Activated T-helper 1 cell treated with anti-CD3 and anti-CD28 coated beads, Interleukin-12 subunit alpha, Interleukin-12 subunit beta, Interleukin-2, Interleukin-4 antibody, amounts not matched to agents 30 ng/mL and 10 ng/mL and 1 ng/mL, durations not matched to agents 14 hours and 24 hours and 36 hours (primary cell): ENCODE measurements at regions of chr10 and their contacts with region 1.

Region 1: GRCh38 chr10:80205478-80206276 is at the start of gene ANXA11:
- DNase-seq: peak; percentile 76
- H3K4me3 Mint-ChIP-seq: peak within 1 kb of the TSS; percentile 94
- H3K27ac Mint-ChIP-seq: peak within 1 kb of the TSS; percentile 92
- H3K4me1 Mint-ChIP-seq: peaks cover 50% of the 10 kb centered on the region
- H3K27me3 Mint-ChIP-seq: peaks cover 5% of the 10 kb centered on the region
- total RNA-seq, gene ANXA11: 216 and 239 TPM in 2 replicates

Region 2: GRCh38 chr10:78302989-78303854 is 1902.5 kb before region 1 on chr10:
- intact Hi-C with region 1: loop called (anchors 5 kb)
- DNase-seq: peak; percentile 91
- H3K4me3 Mint-ChIP-seq: peak overlapping the region; percentile 87
- H3K27ac Mint-ChIP-seq: peak overlapping the region; percentile 91
- H3K4me1 Mint-ChIP-seq: peaks cover 15% of the 10 kb centered on the region
- H3K27me3 Mint-ChIP-seq: peaks cover 16% of the 10 kb centered on the region

Region 3: GRCh38 chr10:79322616-79323543 is 882.8 kb before region 1 on chr10:
- intact Hi-C with region 1: loop called (anchors 10 kb)
- DNase-seq: peak; percentile 76
- H3K4me3 Mint-ChIP-seq: peak overlapping the region; percentile 70
- H3K27ac Mint-ChIP-seq: peak overlapping the region; percentile 98
- H3K4me1 Mint-ChIP-seq: peaks cover 71% of the 10 kb centered on the region
- H3K27me3 Mint-ChIP-seq: no peaks in the 10 kb centered on the region

Region 4: GRCh38 chr10:79445141-79445976 is 760.3 kb before region 1 on chr10 and contains the start of gene ZCCHC24:
- intact Hi-C with region 1: loop called (anchors 10 kb)
- DNase-seq: peak; percentile 91
- H3K4me3 Mint-ChIP-seq: peak within 1 kb of the TSS; percentile 87
- H3K27ac Mint-ChIP-seq: peak within 1 kb of the TSS; percentile 68
- H3K4me1 Mint-ChIP-seq: peaks cover 21% of the 10 kb centered on the region
- H3K27me3 Mint-ChIP-seq: peaks cover 56% of the 10 kb centered on the region
- total RNA-seq, gene ZCCHC24: 0.52 and 0.59 TPM in 2 replicates

Region 5: GRCh38 chr10:80032503-80032902 is 173.2 kb before region 1 on chr10:
- intact Hi-C with region 1: no loop called
- DNase-seq: no peak
- H3K4me3 Mint-ChIP-seq: no peak overlapping the region
- H3K27ac Mint-ChIP-seq: no peak overlapping the region
- H3K4me1 Mint-ChIP-seq: no peaks in the 10 kb centered on the region
- H3K27me3 Mint-ChIP-seq: peaks cover 6% of the 10 kb centered on the region

Region 6: DNA sequence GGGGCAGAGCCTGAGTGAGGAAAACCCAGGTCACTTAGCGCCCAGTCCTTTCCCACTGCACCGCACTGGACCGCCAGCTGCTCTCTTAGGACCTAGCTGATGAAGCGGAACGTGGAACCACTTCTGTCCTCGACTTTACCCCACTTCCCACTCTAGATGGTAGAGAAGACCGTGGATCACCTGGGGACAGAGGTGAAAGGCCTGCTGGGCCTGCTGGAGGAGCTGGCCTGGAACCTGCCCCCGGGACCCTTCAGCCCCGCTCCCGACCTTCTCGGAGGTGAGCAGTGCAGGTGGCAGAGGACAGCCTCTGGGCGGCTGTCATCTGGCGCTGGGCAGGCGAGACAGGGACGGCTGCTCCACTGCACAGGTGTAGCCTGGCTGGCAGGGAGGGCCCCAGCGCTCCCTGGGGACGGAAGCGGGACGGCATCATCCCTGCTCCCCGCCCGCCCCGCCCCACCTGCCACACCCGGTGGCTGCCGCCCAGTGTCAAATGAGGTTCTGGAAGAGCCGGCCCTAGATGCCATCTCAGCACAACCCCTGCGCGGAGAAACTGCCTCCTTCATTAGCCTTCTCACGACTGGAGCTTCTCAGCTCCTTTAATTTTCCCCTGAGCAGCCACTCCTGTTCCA is 61.5 kb before region 1 on chr10:
- intact Hi-C with region 1: loop called (anchors 1 kb)
- DNase-seq: no peak
- H3K4me3 Mint-ChIP-seq: peak overlapping the region; percentile 64
- H3K27ac Mint-ChIP-seq: peak overlapping the region; percentile 52
- H3K4me1 Mint-ChIP-seq: peaks cover 20% of the 10 kb centered on the region
- H3K27me3 Mint-ChIP-seq: no peaks in the 10 kb centered on the region

Region 7: DNA sequence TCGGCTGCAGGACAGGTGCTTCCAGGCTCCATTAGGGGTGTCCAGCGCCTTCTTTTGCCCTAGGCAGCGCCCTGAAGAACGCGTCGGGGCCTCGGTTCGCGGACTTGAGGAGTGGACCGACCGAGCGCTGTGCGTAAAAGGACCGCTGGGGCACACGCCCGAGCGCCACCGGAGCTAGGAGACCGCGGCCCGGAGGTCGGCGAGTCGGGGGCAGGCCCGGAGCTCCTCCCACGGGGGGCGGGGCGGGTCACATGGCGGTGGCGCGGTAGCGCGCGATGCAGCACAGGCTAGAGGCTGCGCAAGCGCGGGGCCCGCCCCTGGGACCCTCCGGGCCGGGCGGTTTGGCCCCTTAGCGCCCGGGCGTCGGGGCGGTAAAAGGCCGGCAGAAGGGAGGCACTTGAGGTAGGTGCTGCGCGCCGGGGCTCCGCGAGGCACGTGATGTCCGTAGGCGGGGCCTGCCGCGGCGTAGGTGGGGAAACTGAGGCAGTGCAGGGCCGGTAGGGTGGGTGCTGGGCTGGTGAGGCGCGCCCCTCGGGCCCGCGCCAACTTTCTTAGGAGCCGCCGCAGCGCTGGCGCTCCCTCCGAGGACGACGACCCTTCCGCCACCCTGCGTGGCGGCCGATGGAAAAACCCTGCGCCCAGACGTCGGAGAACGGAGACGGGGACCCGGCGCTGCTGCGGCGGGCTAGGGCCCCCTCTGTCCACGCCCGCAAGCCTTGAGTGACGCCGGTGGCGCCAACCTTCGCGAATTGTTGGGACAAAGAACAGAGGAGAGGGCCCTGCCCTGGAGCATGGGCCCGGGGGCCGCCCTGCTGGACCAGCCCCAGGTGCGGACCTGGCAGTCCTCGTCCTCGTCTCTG is 202.8 kb after region 1 on chr10 and contains the start of gene PRXL2A:
- intact Hi-C with region 1: loop called (anchors 5 kb)
- DNase-seq: peak; percentile 81
- H3K4me3 Mint-ChIP-seq: peak within 1 kb of the TSS; percentile 89
- H3K27ac Mint-ChIP-seq: peak within 1 kb of the TSS; percentile 93
- H3K4me1 Mint-ChIP-seq: peaks cover 28% of the 10 kb centered on the region
- H3K27me3 Mint-ChIP-seq: peaks cover 20% of the 10 kb centered on the region
- total RNA-seq, gene PRXL2A: 11.9 and 13.2 TPM in 2 replicates

Region 8: DNA sequence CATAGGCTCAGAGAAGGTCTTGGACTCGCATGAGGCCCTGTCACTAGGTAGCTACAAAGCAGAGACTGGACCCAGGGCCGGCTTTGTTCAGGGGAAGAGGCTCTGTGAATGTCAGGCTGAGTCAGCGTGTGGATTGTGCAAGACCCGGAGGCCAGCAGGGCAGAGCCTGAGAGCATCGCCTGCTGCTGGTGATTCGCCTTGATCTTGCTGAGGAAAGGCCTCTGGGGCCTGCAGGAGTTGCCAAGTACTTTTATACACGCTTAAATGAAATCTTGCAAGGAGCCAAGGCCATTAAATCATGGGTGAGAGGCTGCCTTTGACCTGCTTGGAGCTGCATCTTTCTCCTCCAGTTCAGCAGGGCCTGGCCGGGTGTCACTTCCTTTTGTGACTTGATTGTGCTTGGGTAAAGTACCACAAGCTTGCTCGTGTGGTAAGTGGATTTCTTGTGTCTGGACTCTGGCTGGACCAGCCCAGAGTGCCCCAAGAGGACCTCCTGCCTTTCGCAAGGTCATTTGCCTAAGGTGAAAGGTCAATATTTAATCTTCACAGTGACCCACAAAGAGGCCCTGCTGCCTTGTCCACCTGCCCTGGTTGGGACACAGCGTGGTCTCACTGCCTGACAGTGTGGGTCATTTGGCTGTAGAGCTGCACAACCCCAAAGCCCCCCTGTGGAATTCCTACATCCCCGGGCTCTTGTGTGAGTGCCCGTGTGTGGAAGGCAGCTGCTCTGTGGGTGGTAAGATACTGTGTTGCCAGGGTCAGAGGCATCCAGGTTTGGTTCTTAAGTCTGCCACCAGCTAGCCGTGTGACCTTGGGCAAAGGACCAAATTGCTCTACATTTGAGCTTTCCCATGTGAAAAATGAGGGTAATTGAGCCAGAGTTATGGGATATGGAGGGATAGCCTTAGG is 293.4 kb after region 1 on chr10:
- intact Hi-C with region 1: loop called (anchors 10 kb)
- DNase-seq: peak; percentile 40
- H3K4me3 Mint-ChIP-seq: peak overlapping the region; percentile 74
- H3K27ac Mint-ChIP-seq: peak overlapping the region; percentile 89
- H3K4me1 Mint-ChIP-seq: peaks cover 92% of the 10 kb centered on the region
- H3K27me3 Mint-ChIP-seq: no peaks in the 10 kb centered on the region